IMR-90 (cell line): ENCODE measurements at regions of chr20 and their contacts with region 1.

Region 1: DNA sequence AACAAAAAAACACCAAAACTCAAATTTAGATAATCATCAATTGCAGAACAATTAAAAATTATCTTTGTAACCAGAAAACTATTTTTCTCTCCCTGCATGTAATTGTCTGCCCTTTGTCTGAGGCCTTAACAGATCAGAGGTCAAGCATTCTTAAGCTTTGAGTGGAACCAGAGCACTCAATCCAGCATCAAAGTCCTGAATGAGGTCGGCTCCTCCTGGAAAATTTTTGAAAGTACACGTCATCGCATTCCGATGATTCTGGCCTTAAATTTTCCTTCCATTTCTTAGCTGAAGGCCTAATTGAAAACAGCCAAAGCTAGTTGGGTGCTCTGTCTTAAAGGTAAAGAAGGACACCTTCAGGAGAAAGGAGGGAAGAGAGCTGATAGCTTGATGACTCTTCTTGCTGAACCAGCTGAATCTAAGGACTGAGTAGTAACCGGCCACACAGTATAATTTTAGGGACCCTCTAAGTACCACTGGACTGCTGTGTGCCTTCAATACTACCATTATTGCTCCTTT is 510.2 kb upstream of the SULF2 start:
- DNase-seq: peak; percentile 94
- ATAC-seq: peak; percentile 91
- H3K4me3 ChIP-seq: no peak overlapping the region
- H3K27ac ChIP-seq: peak overlapping the region; percentile 47; the same call in 1 of the 2 replicates
- H3K4me1 ChIP-seq: peaks cover 14% of the 10 kb centered on the region
- H3K27me3 ChIP-seq: no peaks in the 10 kb centered on the region; the same call in 1 of the 2 replicates
- CTCF ChIP-seq: peak; percentile 53
- POLR2A ChIP-seq: no peak
- RAD21 ChIP-seq: peak; percentile 62

Region 2: GRCh38 chr20:47663333-47664067 is 632.0 kb before region 1 on chr20:
- CTCF ChIA-PET with region 1: interaction called, 5 read pairs
- POLR2A ChIA-PET with region 1: no interaction called
- dilution Hi-C with region 1: no loop called
- in situ Hi-C with region 1: no loop called
- intact Hi-C with region 1: loop called (anchors 5 kb)
- DNase-seq: peak; percentile 70
- ATAC-seq: peak; percentile 97
- H3K4me3 ChIP-seq: no peak overlapping the region
- H3K27ac ChIP-seq: no peak overlapping the region
- H3K4me1 ChIP-seq: no peaks in the 10 kb centered on the region
- H3K27me3 ChIP-seq: no peaks in the 10 kb centered on the region
- CTCF ChIP-seq: peak; percentile 92
- POLR2A ChIP-seq: no peak
- RAD21 ChIP-seq: peak; percentile 81

Region 3: DNA sequence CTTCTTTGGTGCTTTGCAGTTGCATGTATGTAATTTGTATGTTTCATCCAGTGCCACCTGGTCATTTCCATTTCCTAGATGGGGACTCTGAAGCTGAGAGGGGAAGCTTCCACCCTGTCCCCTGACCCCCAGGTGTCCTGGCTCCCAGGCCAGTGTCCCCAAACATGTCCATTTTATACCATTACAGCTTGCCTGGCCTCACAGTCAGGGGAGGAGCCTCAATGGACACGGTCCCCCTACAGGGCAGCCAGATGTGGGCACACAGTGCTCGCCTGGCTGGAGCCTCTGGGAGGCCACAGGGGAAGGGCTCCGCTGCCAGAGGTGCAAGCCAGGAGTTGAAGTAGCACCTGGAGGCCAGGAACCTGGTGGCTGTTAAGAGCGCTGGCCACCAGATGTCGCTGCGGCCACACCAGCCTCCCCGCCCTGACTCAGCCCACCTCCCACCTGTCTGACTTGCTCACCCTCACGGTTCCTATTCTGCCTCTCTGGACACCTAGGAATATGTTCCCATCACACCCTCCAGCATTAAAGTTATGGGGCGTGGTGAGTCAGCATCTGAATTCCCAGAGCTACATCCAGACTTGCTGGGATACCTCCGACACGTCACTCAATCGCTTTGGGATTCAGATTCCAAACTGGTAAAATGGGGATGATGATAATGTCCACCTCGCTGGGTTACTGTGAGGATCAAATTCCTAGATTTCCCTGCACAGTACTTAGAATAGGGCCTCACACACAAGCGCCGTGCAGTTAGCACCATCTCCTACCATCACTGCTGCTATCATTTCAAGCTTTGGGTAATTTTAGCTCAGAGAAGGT is 617.7 kb before region 1 on chr20:
- CTCF ChIA-PET with region 1: interaction called, 6 read pairs
- POLR2A ChIA-PET with region 1: no interaction called
- dilution Hi-C with region 1: no loop called
- in situ Hi-C with region 1: loop called (anchors 10 kb)
- intact Hi-C with region 1: loop called (anchors 2 kb)
- DNase-seq: peak; percentile 16
- ATAC-seq: peak; percentile 42; the same call in 1 of the 2 replicates
- H3K4me3 ChIP-seq: no peak overlapping the region
- H3K27ac ChIP-seq: no peak overlapping the region
- H3K4me1 ChIP-seq: no peaks in the 10 kb centered on the region; the same call in 1 of the 2 replicates
- H3K27me3 ChIP-seq: peaks cover 3% of the 10 kb centered on the region; the same call in 1 of the 2 replicates
- CTCF ChIP-seq: peak; percentile 65
- POLR2A ChIP-seq: no peak
- RAD21 ChIP-seq: peak; percentile 68

Region 4: GRCh38 chr20:47785854-47786764 is 509.4 kb before region 1 on chr20:
- CTCF ChIA-PET with region 1: interaction called, 7 read pairs
- POLR2A ChIA-PET with region 1: no interaction called
- dilution Hi-C with region 1: no loop called
- in situ Hi-C with region 1: no loop called
- intact Hi-C with region 1: loop called (anchors 10 kb)
- DNase-seq: peak; percentile 71
- ATAC-seq: peak; percentile 72
- H3K4me3 ChIP-seq: peak overlapping the region; percentile 37
- H3K27ac ChIP-seq: peak overlapping the region; percentile 21; the same call in 1 of the 2 replicates
- H3K4me1 ChIP-seq: peaks cover 4% of the 10 kb centered on the region; the same call in 1 of the 2 replicates
- H3K27me3 ChIP-seq: peaks cover 54% of the 10 kb centered on the region
- CTCF ChIP-seq: peak; percentile 58
- POLR2A ChIP-seq: no peak
- RAD21 ChIP-seq: peak; percentile 70

Region 5: DNA sequence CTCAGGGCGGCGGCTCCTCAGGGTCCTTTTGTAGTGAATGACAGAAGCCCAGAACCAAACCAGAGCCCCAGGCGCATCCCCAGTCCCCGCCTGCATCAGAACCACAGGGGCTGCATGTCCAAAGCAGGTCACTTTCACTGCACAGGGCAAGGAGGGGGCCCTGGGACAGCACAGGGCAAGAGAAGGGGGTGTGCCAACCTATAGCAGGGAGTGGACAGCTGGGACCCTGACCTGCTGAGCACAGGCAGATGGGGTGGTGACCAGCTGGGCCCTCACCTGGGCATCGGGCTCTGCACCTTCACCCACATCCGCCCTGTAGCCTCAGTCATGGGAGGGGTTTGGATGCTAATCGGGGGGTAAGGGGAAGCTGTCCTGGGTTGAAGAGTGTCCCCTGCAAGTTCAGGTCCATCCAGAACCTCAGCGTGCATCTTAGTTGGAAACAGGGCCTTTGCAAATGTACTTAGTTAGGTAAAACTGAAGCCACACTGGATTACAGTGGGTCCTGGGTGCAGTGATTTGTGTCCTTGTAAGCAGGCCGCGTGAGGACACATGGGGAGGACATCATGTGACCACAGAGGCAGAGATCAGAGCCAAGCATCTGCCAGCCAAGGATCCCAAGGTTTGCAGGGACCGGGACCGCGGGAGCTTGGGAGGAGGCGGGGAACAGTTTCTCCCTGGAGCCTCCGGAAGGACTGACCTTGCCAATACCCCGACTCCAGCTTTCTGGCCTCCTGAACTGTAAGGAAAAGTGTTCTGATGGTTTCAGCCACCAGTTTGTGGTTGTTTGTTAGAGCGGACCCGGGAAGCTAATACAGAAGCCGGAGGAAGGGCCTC is 31.1 kb after region 1 on chr20:
- CTCF ChIA-PET with region 1: no interaction called
- POLR2A ChIA-PET with region 1: no interaction called
- dilution Hi-C with region 1: no loop called
- in situ Hi-C with region 1: no loop called
- intact Hi-C with region 1: no loop called
- DNase-seq: no peak
- ATAC-seq: no peak
- H3K4me3 ChIP-seq: no peak overlapping the region
- H3K27ac ChIP-seq: no peak overlapping the region
- H3K4me1 ChIP-seq: 0 out of 2 replicates have a peak, but pooled peaks cover 2% of the 10 kb centered on the region
- H3K27me3 ChIP-seq: peaks cover 18% of the 10 kb centered on the region
- CTCF ChIP-seq: no peak
- POLR2A ChIP-seq: no peak
- RAD21 ChIP-seq: no peak

Region 6: GRCh38 chr20:48921151-48921898 is 625.8 kb after region 1 on chr20 and contains the start of gene ARFGEF2:
- CTCF ChIA-PET with region 1: no interaction called
- POLR2A ChIA-PET with region 1: no interaction called
- dilution Hi-C with region 1: no loop called
- in situ Hi-C with region 1: loop called (anchors 25 kb)
- intact Hi-C with region 1: no loop called
- DNase-seq: peak; percentile 87
- ATAC-seq: peak; percentile 97
- H3K4me3 ChIP-seq: peak within 1 kb of the TSS; percentile 82
- H3K27ac ChIP-seq: peak within 1 kb of the TSS; percentile 77
- H3K4me1 ChIP-seq: peaks cover 2% of the 10 kb centered on the region; the same call in 1 of the 2 replicates
- H3K27me3 ChIP-seq: no peaks in the 10 kb centered on the region; the same call in 1 of the 2 replicates
- CTCF ChIP-seq: 0 out of 2 replicates have a peak, but pooled peaks have one; percentile 7
- POLR2A ChIP-seq: peak; percentile 93
- RAD21 ChIP-seq: no peak
- total RNA-seq, gene ARFGEF2: 39.1 and 40.5 TPM in 2 replicates